Mammary epithelial cell (primary cell): ENCODE measurements at regions of chr10 and their contacts with region 1.

Region 1: DNA sequence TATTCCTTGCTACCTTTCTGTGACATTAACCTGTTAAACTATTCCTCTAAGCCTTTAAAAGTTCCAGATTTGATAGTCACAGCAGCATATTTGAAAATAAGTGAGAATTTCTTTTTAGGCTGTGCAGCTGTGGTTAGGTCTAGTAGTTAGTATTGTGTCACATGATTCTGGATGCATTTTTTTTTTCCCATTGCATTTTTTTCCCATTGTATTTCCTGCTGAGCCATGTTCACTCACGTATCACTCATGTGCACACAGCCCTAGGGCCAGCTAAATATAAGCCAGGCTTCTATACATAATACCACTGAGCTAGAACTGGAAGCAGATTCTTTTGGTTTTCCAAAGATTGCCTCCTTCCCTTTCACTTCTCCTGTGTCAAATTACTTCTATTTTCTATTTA is 37.4 kb downstream of the DNAJC9 start:
- DNase-seq: peak; percentile 62
- H3K4me3 ChIP-seq: no peak overlapping the region
- H3K27ac ChIP-seq: no peak overlapping the region
- H3K4me1 ChIP-seq: peaks cover 7% of the 10 kb centered on the region
- H3K27me3 ChIP-seq: no peaks in the 10 kb centered on the region
- CTCF ChIP-seq: no peak

Region 2: GRCh38 chr10:73131301-73131700 is 78.4 kb before region 1 on chr10:
- CTCF ChIA-PET with region 1: no interaction called
- dilution Hi-C with region 1: loop called (anchors 5 kb)
- in situ Hi-C with region 1: no loop called
- intact Hi-C with region 1: no loop called
- DNase-seq: peak; percentile 53
- H3K4me3 ChIP-seq: no peak overlapping the region
- H3K27ac ChIP-seq: no peak overlapping the region
- H3K4me1 ChIP-seq: peaks cover 11% of the 10 kb centered on the region
- H3K27me3 ChIP-seq: no peaks in the 10 kb centered on the region
- CTCF ChIP-seq: no peak

Region 3: GRCh38 chr10:73174148-73174925 is 35.4 kb before region 1 on chr10:
- CTCF ChIA-PET with region 1: no interaction called
- dilution Hi-C with region 1: loop called (anchors 5 kb)
- in situ Hi-C with region 1: no loop called
- intact Hi-C with region 1: no loop called
- DNase-seq: no peak
- H3K4me3 ChIP-seq: no peak overlapping the region
- H3K27ac ChIP-seq: no peak overlapping the region
- H3K4me1 ChIP-seq: no peaks in the 10 kb centered on the region
- H3K27me3 ChIP-seq: no peaks in the 10 kb centered on the region
- CTCF ChIP-seq: no peak

Region 4: DNA sequence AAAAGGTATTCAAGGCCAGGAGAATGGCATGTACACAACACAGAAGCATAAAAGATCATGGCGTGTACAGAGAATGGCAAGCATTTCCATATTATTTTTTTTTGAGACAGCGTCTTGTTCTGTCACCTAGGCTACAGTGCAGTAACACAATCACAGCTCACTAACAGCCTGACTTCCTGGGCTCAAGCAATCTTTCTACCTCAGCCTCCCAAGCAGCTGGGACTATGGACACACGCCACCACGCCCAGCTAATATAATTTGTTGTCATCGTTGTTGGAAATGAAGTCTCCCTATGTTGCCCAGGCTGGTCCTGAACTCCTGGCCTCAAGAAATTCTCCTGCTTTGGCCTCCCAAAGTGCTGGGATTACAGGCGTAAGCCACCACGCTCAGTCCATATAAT is 176.9 kb after region 1 on chr10:
- CTCF ChIA-PET with region 1: no interaction called
- dilution Hi-C with region 1: no loop called
- in situ Hi-C with region 1: no loop called
- intact Hi-C with region 1: no loop called
- DNase-seq: no peak
- H3K4me3 ChIP-seq: no peak overlapping the region
- H3K27ac ChIP-seq: no peak overlapping the region
- H3K4me1 ChIP-seq: no peaks in the 10 kb centered on the region
- H3K27me3 ChIP-seq: no peaks in the 10 kb centered on the region
- CTCF ChIP-seq: no peak